Left colon (tissue), 2 donors: ENCODE measurements at regions of chr12 and their contacts with region 1.

Region 1: GRCh38 chr12:109110988-109111495 is 5.3 kb upstream of the ACACB start:
- DNase-seq: peak; percentile 93 to 96
- ATAC-seq: peak; percentile 88

Region 2: GRCh38 chr12:109147954-109148353 is 36.9 kb after region 1 on chr12:
- intact Hi-C with region 1: no loop called
- DNase-seq: peak in 1 of 2 donors; percentile 52
- ATAC-seq: no peak

Region 3: DNA sequence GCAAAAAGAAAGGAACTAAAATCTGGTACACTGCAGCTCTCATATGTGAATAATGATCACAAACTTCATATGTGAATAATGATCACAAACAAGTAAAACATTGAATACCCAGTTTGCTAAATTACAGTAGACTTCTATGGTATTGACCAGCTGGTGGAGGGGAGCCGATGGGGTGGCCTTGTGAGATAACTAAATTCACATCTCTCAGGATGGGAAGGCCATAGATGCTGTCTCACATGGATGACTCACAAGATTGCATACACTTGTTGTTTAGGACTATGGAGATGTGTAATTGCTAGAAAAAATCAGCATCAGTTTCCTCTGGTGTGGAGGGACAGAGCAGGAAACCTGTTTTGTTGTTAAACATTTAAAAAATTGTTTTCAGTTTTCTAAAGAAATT is 54.6 kb after region 1 on chr12:
- intact Hi-C with region 1: loop called in 1 of 2 experiments (anchors 10 kb)
- DNase-seq: no peak
- ATAC-seq: no peak